H1 (cell line): ENCODE measurements at regions of chr7 and their contacts with region 1.

Region 1: GRCh38 chr7:116929914-116930913 is 23.1 kb upstream of the ST7 start:
- DNase-seq: peak; percentile 68 to 92
- H3K4me3 ChIP-seq: no peak overlapping the region
- H3K27ac ChIP-seq: no peak overlapping the region
- H3K4me1 ChIP-seq: no peaks in the 10 kb centered on the region
- H3K27me3 ChIP-seq: no peaks in the 10 kb centered on the region
- CTCF ChIP-seq: peak; percentile 73 to 96 (median 89)
- EP300 ChIP-seq: no peak
- POLR2A ChIP-seq: no peak
- RAD21 ChIP-seq: peak; percentile 95 to 98

Region 2: GRCh38 chr7:116815041-116815440 is 115.2 kb before region 1 on chr7:
- CTCF ChIA-PET with region 1: no interaction called
- POLR2A ChIA-PET with region 1: no interaction called
- DNase-seq: no peak
- H3K4me3 ChIP-seq: no peak overlapping the region
- H3K27ac ChIP-seq: no peak overlapping the region
- H3K4me1 ChIP-seq: no peaks in the 10 kb centered on the region
- H3K27me3 ChIP-seq: no peaks in the 10 kb centered on the region
- CTCF ChIP-seq: no peak
- EP300 ChIP-seq: no peak
- POLR2A ChIP-seq: no peak
- RAD21 ChIP-seq: no peak

Region 3: DNA sequence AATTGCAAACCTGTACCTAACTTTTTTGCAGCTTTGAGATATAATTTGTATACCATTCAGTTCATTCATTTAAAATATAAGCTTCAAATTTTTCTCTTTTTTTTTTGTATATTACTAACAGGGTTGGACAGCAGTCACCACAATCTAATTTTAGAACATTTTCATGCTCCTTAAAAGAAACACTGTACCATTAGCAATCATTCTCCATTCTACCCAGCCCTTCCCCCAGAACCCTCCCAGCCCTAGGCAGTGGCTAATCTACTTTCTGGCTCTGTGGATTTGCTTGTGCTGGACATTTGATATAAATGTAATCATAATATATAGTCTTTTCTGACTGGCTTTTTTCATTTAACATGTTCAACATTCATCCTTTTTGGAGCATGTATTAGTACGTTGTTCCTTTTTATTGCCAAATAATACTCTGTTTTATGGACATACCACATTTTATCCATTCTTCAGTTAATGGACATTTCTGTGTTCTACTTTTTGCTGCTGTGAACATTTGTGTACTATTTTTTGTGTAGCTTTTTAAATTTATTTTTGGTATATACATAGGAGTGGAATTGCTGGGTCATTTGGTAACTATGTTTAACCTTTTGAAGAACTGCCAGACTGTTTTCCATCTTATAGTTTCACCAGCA is 17.8 kb before region 1 on chr7:
- CTCF ChIA-PET with region 1: interaction called, 24 read pairs
- POLR2A ChIA-PET with region 1: no interaction called
- DNase-seq: no peak
- H3K4me3 ChIP-seq: no peak overlapping the region
- H3K27ac ChIP-seq: no peak overlapping the region
- H3K4me1 ChIP-seq: no peaks in the 10 kb centered on the region
- H3K27me3 ChIP-seq: no peaks in the 10 kb centered on the region
- CTCF ChIP-seq: no peak
- EP300 ChIP-seq: no peak
- POLR2A ChIP-seq: no peak
- RAD21 ChIP-seq: no peak

Region 4: GRCh38 chr7:117014673-117015133 is 84.5 kb after region 1 on chr7:
- CTCF ChIA-PET with region 1: interaction called, 29 read pairs
- POLR2A ChIA-PET with region 1: no interaction called
- DNase-seq: no peak
- H3K4me3 ChIP-seq: no peak overlapping the region
- H3K27ac ChIP-seq: no peak overlapping the region
- H3K4me1 ChIP-seq: no peaks in the 10 kb centered on the region; a peak in 2 of 7 replicates
- H3K27me3 ChIP-seq: no peaks in the 10 kb centered on the region
- CTCF ChIP-seq: no peak
- EP300 ChIP-seq: no peak
- POLR2A ChIP-seq: no peak
- RAD21 ChIP-seq: no peak

Region 5: DNA sequence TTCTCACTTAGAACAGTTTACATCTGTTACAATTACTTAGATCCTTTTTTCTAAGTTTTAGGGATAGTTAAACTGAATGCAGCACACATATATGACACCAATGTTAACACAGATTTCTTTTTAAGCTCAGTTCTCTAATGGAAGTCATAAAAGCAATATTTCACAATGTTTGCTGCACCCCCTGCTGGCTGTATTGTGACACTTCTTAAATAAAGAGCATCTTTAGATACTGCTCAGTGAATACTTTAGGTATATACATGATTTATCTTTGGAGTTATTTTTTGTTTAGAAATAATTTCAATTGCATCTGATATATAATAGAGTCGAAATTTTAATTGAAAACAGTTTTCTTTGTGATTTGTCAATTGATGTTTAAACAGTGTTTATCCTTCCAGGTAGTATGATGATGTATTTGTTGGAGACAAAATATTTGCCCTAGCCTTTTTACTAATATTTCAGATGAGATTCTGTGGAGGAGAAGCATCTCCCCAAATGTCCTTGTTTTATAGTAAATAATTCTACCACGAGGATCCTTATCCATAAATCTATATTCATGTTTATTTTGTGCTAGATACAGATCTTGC is 197.5 kb after region 1 on chr7:
- CTCF ChIA-PET with region 1: interaction called, 168 read pairs
- POLR2A ChIA-PET with region 1: no interaction called
- DNase-seq: no peak
- H3K4me3 ChIP-seq: no peak overlapping the region
- H3K27ac ChIP-seq: no peak overlapping the region
- H3K4me1 ChIP-seq: peaks cover 0 to 5% (median 3%) of the 10 kb centered on the region in 4 experiments; a peak in 4 of 7 replicates
- H3K27me3 ChIP-seq: no peaks in the 10 kb centered on the region
- CTCF ChIP-seq: peak in 2 of 3 experiments; percentile 37 to 62; a peak in 2 of 4 replicates
- EP300 ChIP-seq: no peak
- POLR2A ChIP-seq: no peak
- RAD21 ChIP-seq: peak; percentile 43 to 45

Region 6: DNA sequence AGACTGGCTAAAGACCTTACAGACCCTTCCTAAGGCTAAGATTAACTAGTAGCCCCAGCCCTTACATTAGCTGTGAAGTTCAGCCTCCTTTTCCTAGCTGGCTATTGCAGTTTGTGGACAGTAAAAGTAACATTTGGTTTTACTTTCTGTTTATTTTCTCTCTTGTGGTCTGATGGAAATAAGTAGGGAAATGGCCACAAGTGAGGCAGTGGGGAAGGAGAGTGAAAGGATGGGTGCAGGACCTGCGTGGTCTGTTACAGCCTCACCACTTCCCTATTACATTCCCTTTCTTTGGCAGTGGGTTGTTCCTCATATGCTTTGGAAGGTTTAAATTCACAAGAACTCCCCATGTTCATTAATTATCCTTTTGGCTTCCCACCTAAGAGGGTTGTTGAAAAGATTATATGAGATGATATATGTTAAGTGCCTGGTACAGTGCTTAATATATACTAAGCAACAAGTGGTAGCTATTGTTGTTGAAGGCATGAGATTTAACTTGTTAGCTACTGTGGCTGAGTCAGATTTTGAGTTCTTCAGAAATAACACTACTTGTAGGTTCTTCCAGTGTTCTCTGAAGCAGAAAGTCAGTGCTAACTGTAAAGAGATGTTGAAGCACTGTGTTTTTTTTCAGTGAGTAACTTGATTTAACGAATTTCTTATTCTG is 204.8 kb after region 1 on chr7:
- CTCF ChIA-PET with region 1: interaction called, 17 read pairs
- POLR2A ChIA-PET with region 1: no interaction called
- DNase-seq: no peak
- H3K4me3 ChIP-seq: no peak overlapping the region
- H3K27ac ChIP-seq: no peak overlapping the region
- H3K4me1 ChIP-seq: peaks cover 0 to 11% (median 4%) of the 10 kb centered on the region in 4 experiments; a peak in 3 of 7 replicates
- H3K27me3 ChIP-seq: no peaks in the 10 kb centered on the region
- CTCF ChIP-seq: no peak
- EP300 ChIP-seq: no peak
- POLR2A ChIP-seq: no peak
- RAD21 ChIP-seq: no peak